ENCODE measurements at regions of chr9 and their contacts with region 1.

Region 1: GRCh38 chr9:116849721-116850120 is 162.6 kb downstream of the TRIM32 start:
- DNase-seq: no peak
- H3K4me3 Mint-ChIP-seq: no peak overlapping the region
- H3K27ac Mint-ChIP-seq: no peak overlapping the region
- H3K4me1 Mint-ChIP-seq: no peaks in the 10 kb centered on the region
- H3K27me3 Mint-ChIP-seq: no peaks in the 10 kb centered on the region

Region 2: GRCh38 chr9:116608064-116608463 is 241.7 kb before region 1 on chr9:
- CTCF ChIA-PET with region 1: no interaction called
- POLR2A ChIA-PET with region 1: no interaction called
- intact Hi-C with region 1: no loop called
- DNase-seq: no peak
- H3K4me3 Mint-ChIP-seq: no peak overlapping the region
- H3K27ac Mint-ChIP-seq: no peak overlapping the region
- H3K4me1 Mint-ChIP-seq: no peaks in the 10 kb centered on the region
- H3K27me3 Mint-ChIP-seq: no peaks in the 10 kb centered on the region

Region 3: GRCh38 chr9:116837018-116837989 is 12.4 kb before region 1 on chr9:
- CTCF ChIA-PET with region 1: no interaction called
- POLR2A ChIA-PET with region 1: no interaction called
- intact Hi-C with region 1: no loop called
- DNase-seq: no peak
- H3K4me3 Mint-ChIP-seq: no peak overlapping the region
- H3K27ac Mint-ChIP-seq: no peak overlapping the region
- H3K4me1 Mint-ChIP-seq: no peaks in the 10 kb centered on the region
- H3K27me3 Mint-ChIP-seq: peaks cover 8% of the 10 kb centered on the region

Region 4: GRCh38 chr9:116860509-116861120 is 10.9 kb after region 1 on chr9:
- CTCF ChIA-PET with region 1: interaction called, 14 read pairs
- POLR2A ChIA-PET with region 1: no interaction called
- intact Hi-C with region 1: no loop called
- DNase-seq: peak; percentile 27
- H3K4me3 Mint-ChIP-seq: no peak overlapping the region
- H3K27ac Mint-ChIP-seq: no peak overlapping the region
- H3K4me1 Mint-ChIP-seq: no peaks in the 10 kb centered on the region
- H3K27me3 Mint-ChIP-seq: peaks cover 4% of the 10 kb centered on the region